ENCODE measurements at regions of chr12 and their contacts with region 1.

Region 1: GRCh38 chr12:88052686-88053085 is 23.5 kb upstream of the C12orf50 start:
- DNase-seq: no peak
- ATAC-seq: peak in 1 of 4 donors; percentile 40
- H3K4me3 ChIP-seq: no peak overlapping the region
- H3K27ac ChIP-seq: no peak overlapping the region
- H3K4me1 ChIP-seq: no peaks in the 10 kb centered on the region
- H3K27me3 ChIP-seq: no peaks in the 10 kb centered on the region
- CTCF ChIP-seq: peak; percentile 26

Region 2: DNA sequence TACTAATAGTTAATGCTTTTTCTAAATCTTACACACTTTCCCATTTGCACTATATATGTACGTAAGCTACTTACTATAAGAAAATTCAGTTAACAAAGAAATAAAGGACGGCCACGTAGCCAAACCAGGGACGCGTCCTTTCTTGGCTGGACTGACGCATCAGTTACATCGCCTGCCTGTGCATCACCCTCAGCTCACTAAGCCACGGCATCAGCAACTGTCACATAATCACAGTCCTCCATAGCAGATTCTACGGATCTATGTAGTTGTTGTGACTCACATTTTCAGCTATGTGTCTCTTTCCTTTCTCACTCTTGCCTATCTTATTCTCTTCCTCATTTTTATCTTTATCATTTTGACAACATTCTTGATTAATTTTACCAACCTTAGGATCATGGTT is 14.6 kb after region 1 on chr12:
- intact Hi-C with region 1: loop called in 1 of 2 experiments (anchors 1 kb)
- DNase-seq: no peak
- ATAC-seq: no peak
- H3K4me3 ChIP-seq: no peak overlapping the region
- H3K27ac ChIP-seq: no peak overlapping the region
- H3K4me1 ChIP-seq: no peaks in the 10 kb centered on the region
- H3K27me3 ChIP-seq: no peaks in the 10 kb centered on the region
- CTCF ChIP-seq: no peak

Region 3: DNA sequence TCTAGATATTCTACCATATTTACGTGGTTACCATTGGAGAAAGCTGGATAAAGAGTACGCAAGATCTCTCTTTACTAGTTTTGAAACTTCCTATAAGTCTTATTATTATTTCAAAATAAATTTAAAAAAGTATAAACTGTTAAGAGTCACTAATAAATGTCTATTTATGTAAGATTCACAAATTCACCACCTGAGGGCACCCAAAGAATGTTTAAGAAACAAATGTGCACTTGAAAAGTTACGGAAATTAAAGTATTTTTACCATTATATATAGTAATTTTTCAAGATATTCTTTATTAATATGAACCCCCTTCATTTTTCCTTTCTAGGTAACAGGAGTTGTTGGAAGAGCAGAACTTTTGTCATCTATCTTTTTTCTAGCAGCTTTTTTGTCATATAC is 101.3 kb after region 1 on chr12:
- intact Hi-C with region 1: no loop called
- DNase-seq: no peak
- ATAC-seq: no peak
- H3K4me3 ChIP-seq: no peak overlapping the region
- H3K27ac ChIP-seq: no peak overlapping the region
- H3K4me1 ChIP-seq: no peaks in the 10 kb centered on the region
- H3K27me3 ChIP-seq: no peaks in the 10 kb centered on the region
- CTCF ChIP-seq: peak; percentile 18